ENCODE measurements at regions of chr7 and their contacts with region 1.

Region 1: DNA sequence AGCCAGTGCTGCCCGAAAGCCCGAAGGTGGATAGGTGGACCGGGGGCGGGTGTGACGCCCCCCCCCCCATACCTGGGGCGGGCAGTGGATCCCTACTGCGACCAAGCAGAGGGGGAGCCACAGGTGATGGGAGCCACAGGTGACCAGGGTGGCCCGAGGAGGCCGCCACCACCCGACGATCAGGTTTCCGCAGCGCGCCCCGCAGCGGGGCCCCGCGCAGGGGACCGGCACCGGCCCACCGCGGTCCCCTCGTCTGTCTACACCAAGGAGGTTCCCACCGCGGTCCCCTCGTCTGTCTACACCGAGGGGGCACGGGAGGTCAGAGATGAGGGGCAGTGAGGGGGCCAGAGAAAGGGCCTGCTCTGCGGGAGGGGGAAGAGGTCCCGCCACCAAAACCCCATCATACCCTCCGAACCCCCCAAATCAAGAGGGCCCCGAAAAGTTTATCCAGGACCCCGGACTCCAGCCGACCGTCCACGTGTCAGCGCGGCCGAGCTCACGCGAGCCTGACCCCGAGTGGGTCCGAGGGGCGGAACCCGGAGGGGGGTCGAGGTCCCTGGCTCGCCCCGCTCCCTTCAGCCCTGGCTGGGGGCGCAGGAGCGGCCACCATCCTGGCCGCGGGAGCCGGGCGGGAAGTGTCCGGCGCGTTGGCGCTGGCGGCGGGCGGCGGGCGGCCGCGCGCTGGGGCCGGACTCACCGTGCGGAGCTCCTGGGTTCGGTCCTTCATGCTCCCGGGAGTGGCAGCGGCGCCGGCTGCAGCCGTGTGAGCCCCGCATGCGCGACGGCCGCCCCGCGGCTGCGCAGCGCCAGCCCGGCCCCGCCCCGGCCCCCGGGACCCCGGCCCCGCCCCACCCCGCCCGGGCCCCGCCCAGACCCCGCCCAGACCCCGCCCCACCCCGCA is at the start of gene STX1A:
- DNase-seq: peak; percentile 85
- ATAC-seq: peak; percentile 59
- H3K4me3 Mint-ChIP-seq: peak within 1 kb of the TSS; percentile 75
- H3K27ac Mint-ChIP-seq: peak within 1 kb of the TSS; percentile 66
- H3K4me1 Mint-ChIP-seq: peaks cover 34% of the 10 kb centered on the region
- H3K27me3 Mint-ChIP-seq: peaks cover 4% of the 10 kb centered on the region
- total RNA-seq, gene STX1A: 16.6 to 16.8 TPM

Region 2: GRCh38 chr7:73557108-73557396 is 162.1 kb before region 1 on chr7:
- CTCF ChIA-PET with region 1: no interaction called
- POLR2A ChIA-PET with region 1: no interaction called
- intact Hi-C with region 1: loop called in 1 of 2 experiments (anchors 1 kb)
- DNase-seq: peak; percentile 95
- ATAC-seq: peak; percentile 92
- H3K4me3 Mint-ChIP-seq: peak overlapping the region; percentile 93
- H3K27ac Mint-ChIP-seq: peak overlapping the region; percentile 91
- H3K4me1 Mint-ChIP-seq: peaks cover 35% of the 10 kb centered on the region
- H3K27me3 Mint-ChIP-seq: no peaks in the 10 kb centered on the region

Region 3: DNA sequence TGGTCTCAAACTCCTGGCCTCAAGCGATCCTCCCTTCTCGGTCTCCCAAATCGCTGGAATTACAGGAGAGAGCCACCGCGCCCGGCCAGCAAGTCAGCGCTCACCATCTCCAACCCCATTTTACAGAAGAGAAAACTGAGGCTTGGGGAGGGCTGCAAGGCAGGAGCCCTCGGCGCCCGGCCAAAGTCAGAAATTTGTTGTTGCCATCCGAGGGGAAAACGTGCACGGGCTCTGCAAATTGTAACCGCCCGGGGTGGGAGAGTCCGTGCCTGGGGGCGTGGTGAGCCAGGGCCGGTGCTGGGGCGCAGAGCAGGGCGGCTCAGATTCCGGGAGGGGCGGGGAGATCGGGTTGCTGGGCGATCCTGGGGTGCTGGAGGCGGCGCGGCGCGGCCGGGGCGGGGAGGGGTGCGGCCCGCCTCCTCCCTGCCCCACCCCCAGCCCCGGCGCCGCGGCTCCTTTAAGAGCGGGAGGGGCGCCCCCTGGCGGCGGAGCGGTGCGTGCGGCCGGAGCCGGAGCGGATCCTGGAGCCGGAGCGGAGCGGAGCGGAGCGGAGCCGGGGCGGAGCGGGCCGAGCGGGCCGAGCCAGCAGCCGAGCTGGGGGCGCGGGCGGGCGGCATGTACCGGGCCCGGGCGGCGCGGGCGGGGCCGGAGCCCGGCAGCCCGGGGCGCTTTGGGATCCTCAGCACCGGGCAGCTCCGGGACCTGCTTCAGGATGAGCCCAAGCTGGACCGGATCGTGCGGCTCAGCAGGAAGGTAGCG is 51.6 kb before region 1 on chr7 and contains the start of gene VPS37D:
- CTCF ChIA-PET with region 1: interaction called, 4 read pairs
- POLR2A ChIA-PET with region 1: no interaction called
- intact Hi-C with region 1: loop called (anchors 1 to 5 kb)
- DNase-seq: peak; percentile 96
- ATAC-seq: peak; percentile 94
- H3K4me3 Mint-ChIP-seq: peak within 1 kb of the TSS; percentile 57
- H3K27ac Mint-ChIP-seq: no peak within 1 kb of the TSS
- H3K4me1 Mint-ChIP-seq: peaks cover 5% of the 10 kb centered on the region
- H3K27me3 Mint-ChIP-seq: peaks cover 40% of the 10 kb centered on the region
- total RNA-seq, gene VPS37D: 0.35 to 0.39 TPM

Region 4: GRCh38 chr7:73701357-73701995 is 17.7 kb before region 1 on chr7:
- CTCF ChIA-PET with region 1: interaction called, 21 read pairs
- POLR2A ChIA-PET with region 1: interaction called, 17 read pairs
- intact Hi-C with region 1: loop called (anchors 1 to 2 kb)
- DNase-seq: peak; percentile 59
- ATAC-seq: no peak
- H3K4me3 Mint-ChIP-seq: no peak overlapping the region
- H3K27ac Mint-ChIP-seq: no peak overlapping the region
- H3K4me1 Mint-ChIP-seq: peaks cover 9% of the 10 kb centered on the region
- H3K27me3 Mint-ChIP-seq: no peaks in the 10 kb centered on the region

Region 5: GRCh38 chr7:73851410-73852234 is 132.5 kb after region 1 on chr7:
- CTCF ChIA-PET with region 1: interaction called, 4 read pairs
- POLR2A ChIA-PET with region 1: no interaction called
- intact Hi-C with region 1: loop called in 1 of 2 experiments (anchors 1 kb)
- DNase-seq: peak; percentile 60
- ATAC-seq: peak; percentile 96
- H3K4me3 Mint-ChIP-seq: no peak overlapping the region
- H3K27ac Mint-ChIP-seq: peak overlapping the region; percentile 65
- H3K4me1 Mint-ChIP-seq: peaks cover 33% of the 10 kb centered on the region
- H3K27me3 Mint-ChIP-seq: peaks cover 12% of the 10 kb centered on the region